HepG2 (cell line): ENCODE measurements at regions of chr16 and their contacts with region 1.

Region 1: DNA sequence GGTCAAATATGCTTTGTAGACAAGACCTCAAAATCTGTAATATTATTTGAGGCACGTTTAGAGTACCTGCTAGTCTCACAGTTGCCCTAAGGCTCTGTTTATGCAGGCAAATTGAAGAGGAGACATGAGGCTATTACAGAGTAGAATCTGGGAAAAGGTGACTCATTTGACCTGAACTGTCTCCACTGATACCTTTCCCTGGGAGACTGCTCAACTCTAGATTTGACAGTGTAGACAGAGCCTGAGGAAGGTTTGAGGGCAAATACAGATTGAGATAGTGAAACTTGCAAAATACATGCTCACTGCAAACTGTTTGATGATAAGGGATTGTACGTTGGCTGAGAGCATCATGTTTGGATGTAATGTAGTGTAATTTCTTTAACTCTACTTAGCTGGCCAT is 1266.6 kb upstream of the CDH8 start:
- DNase-seq: no peak
- ATAC-seq: no peak
- H3K4me3 ChIP-seq: no peak overlapping the region
- H3K27ac ChIP-seq: no peak overlapping the region
- H3K4me1 ChIP-seq: no peaks in the 10 kb centered on the region
- H3K27me3 ChIP-seq: no peaks in the 10 kb centered on the region
- CTCF ChIP-seq: no peak
- EP300 ChIP-seq: no peak
- POLR2A ChIP-seq: no peak
- RAD21 ChIP-seq: no peak

Region 2: DNA sequence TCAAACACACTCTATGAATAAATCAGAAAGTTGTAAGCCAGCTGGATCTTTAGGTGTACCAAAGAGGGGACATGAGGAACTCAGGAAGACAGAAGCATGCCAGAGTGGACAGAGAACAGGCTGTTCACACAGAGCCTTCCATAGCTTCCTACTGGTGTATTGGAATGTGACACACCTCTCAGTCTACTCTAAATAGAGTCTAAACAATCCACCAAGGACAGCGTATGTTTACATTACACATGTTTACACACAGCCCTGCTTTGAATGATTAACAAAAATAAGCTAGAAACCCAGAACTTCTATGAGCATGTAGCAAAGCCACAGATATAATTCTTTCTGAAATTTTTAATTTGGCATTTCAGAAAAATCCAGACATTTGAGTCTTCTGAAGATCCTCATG is 12.4 kb after region 1 on chr16:
- CTCF ChIA-PET with region 1: no interaction called
- POLR2A ChIA-PET with region 1: no interaction called
- in situ Hi-C with region 1: no loop called
- intact Hi-C with region 1: no loop called
- DNase-seq: peak; percentile 36
- ATAC-seq: peak; percentile 100
- H3K4me3 ChIP-seq: no peak overlapping the region
- H3K27ac ChIP-seq: no peak overlapping the region
- H3K4me1 ChIP-seq: peaks cover 11% of the 10 kb centered on the region
- H3K27me3 ChIP-seq: no peaks in the 10 kb centered on the region
- CTCF ChIP-seq: no peak
- EP300 ChIP-seq: no peak
- POLR2A ChIP-seq: no peak
- RAD21 ChIP-seq: no peak

Region 3: GRCh38 chr16:63822818-63823217 is 520.0 kb after region 1 on chr16:
- CTCF ChIA-PET with region 1: no interaction called
- POLR2A ChIA-PET with region 1: no interaction called
- in situ Hi-C with region 1: no loop called
- intact Hi-C with region 1: no loop called
- DNase-seq: no peak
- ATAC-seq: no peak
- H3K4me3 ChIP-seq: no peak overlapping the region
- H3K27ac ChIP-seq: no peak overlapping the region
- H3K4me1 ChIP-seq: no peaks in the 10 kb centered on the region
- H3K27me3 ChIP-seq: no peaks in the 10 kb centered on the region
- CTCF ChIP-seq: no peak
- EP300 ChIP-seq: no peak
- POLR2A ChIP-seq: no peak
- RAD21 ChIP-seq: no peak

Region 4: GRCh38 chr16:64919929-64920607 is 1617.3 kb after region 1 on chr16:
- CTCF ChIA-PET with region 1: no interaction called
- POLR2A ChIA-PET with region 1: no interaction called
- in situ Hi-C with region 1: no loop called
- intact Hi-C with region 1: loop called (anchors 10 kb)
- DNase-seq: no peak
- ATAC-seq: no peak
- H3K4me3 ChIP-seq: no peak overlapping the region
- H3K27ac ChIP-seq: no peak overlapping the region
- H3K4me1 ChIP-seq: no peaks in the 10 kb centered on the region
- H3K27me3 ChIP-seq: no peaks in the 10 kb centered on the region
- CTCF ChIP-seq: no peak
- EP300 ChIP-seq: no peak
- POLR2A ChIP-seq: no peak
- RAD21 ChIP-seq: no peak